PC-9 (cell line): ENCODE measurements at regions of chr21 and their contacts with region 1.

Region 1: DNA sequence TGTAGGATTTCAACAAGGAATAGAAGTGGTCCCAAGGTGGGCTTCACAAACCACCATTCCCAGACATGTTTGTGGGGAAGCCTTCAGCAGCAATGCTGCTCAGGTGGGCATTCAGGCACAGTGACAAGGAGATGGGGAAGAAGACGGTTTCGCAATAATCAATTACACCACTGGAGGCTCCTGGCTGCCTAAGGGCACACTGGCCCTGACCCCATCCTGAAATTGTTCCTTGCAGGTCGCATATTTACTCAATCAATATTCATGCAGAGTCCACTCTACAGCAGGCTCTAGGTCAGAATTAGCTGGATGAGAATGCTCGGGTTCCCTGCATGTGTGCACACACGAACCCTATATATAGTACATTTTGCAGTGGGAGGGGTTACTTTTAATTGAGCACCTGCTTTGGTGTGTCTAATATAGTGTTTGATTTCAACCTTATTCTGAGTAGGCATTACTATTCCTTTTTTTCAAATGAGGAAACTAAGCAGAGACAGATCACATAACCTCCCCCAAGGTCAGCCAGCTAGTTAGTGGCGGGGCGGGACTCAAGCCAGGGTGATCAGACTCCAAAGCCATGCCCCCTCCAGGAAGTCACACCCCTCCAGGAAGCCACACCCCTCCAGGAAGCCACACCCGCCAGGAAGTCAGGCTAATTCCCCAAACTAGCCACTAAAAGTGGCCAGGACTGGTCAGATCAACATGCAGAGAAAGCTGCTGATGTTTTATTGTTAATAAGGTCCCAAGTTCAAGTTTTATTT is 106.5 kb downstream of the HLCS start:
- DNase-seq: peak; percentile 68 to 76
- H3K4me3 ChIP-seq: no peak overlapping the region
- H3K27ac ChIP-seq: peak overlapping the region; percentile 95
- H3K4me1 ChIP-seq: peaks cover 46% of the 10 kb centered on the region
- H3K27me3 ChIP-seq: no peaks in the 10 kb centered on the region
- CTCF ChIP-seq: no peak

Region 2: GRCh38 chr21:36783612-36784383 is 76.1 kb before region 1 on chr21:
- CTCF ChIA-PET with region 1: no interaction called
- POLR2A ChIA-PET with region 1: no interaction called
- intact Hi-C with region 1: loop called (anchors 2 kb)
- DNase-seq: peak; percentile 67 to 92
- H3K4me3 ChIP-seq: 0 out of 2 replicates have a peak overlapping the region, but pooled peaks have one; percentile 24
- H3K27ac ChIP-seq: peak overlapping the region; percentile 62
- H3K4me1 ChIP-seq: peaks cover 31% of the 10 kb centered on the region
- H3K27me3 ChIP-seq: no peaks in the 10 kb centered on the region
- CTCF ChIP-seq: no peak

Region 3: GRCh38 chr21:36881228-36881627 is 21.3 kb after region 1 on chr21:
- CTCF ChIA-PET with region 1: no interaction called
- POLR2A ChIA-PET with region 1: no interaction called
- intact Hi-C with region 1: no loop called
- DNase-seq: no peak
- H3K4me3 ChIP-seq: no peak overlapping the region
- H3K27ac ChIP-seq: no peak overlapping the region
- H3K4me1 ChIP-seq: no peaks in the 10 kb centered on the region
- H3K27me3 ChIP-seq: no peaks in the 10 kb centered on the region
- CTCF ChIP-seq: no peak

Region 4: DNA sequence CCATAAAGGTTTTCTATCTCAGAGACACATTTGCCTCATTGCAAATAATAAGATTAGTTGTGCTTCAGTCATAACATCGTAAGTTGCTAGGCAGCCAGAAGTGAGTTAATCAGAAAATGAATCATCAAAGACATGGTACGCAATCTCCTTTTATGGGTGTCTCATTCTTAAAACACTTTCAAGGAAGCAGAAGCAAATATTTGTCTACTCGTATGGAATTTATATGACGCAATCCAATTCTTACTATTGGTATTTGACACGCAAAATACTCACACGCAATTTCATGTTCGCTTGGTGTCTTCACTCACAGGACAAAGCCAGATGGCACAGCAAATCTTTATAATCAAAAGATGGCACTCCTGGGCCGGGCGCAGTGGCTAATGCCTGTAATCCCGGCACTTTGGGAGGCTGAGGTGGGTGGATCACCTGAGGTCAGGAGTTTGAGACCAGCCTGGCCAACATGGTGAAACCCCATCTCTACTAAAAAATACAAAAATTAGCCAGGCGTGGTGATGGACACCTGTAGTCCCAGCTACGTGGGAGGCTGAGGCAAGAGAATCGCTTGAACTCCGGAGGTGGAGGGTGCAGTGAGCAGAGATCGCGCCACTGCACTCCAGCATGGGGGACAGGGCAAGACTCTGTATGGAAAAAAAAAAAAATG is 50.1 kb after region 1 on chr21:
- CTCF ChIA-PET with region 1: no interaction called
- POLR2A ChIA-PET with region 1: no interaction called
- intact Hi-C with region 1: loop called (anchors 2 kb)
- DNase-seq: peak; percentile 40 to 97
- H3K4me3 ChIP-seq: no peak overlapping the region
- H3K27ac ChIP-seq: peak overlapping the region; percentile 86
- H3K4me1 ChIP-seq: peaks cover 16% of the 10 kb centered on the region
- H3K27me3 ChIP-seq: no peaks in the 10 kb centered on the region
- CTCF ChIP-seq: no peak

Region 5: DNA sequence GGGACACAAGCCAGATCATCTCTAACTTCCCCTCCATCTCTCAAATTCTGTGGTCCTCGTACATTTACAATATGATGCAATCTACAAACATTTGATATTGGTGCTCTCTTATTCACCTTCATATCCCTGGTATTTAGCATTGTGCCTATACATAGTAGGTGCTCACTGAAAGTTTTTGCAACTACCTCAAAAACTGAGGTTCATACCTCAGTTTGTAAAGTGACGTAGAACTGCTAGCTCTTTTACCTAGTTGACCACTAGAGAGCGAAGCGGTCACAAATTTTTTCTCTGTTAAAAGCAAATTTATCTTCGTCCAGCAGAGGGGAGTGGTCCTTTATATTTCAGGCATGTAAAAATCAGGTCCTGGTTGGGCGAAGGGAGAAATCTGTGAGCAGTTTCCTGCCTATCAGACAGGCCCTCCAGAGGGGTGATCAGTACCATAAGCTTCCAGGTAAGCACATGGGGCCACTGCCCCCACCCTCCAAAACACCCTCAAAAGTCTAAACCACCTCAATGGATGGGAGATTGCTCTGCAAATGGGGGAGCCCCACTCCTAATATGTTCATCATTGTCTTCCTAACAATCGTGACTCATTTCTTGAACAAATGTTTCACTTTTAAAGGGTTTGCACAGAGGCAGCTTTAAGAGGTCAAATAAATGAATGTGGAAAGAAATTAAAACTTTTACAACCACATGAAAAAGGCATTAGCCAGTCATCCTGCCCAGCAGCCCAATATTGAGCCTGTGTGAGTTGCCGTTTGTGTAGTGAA is 117.1 kb after region 1 on chr21:
- CTCF ChIA-PET with region 1: no interaction called
- POLR2A ChIA-PET with region 1: no interaction called
- intact Hi-C with region 1: no loop called
- DNase-seq: peak; percentile 27 to 41
- H3K4me3 ChIP-seq: no peak overlapping the region
- H3K27ac ChIP-seq: no peak overlapping the region
- H3K4me1 ChIP-seq: peaks cover 4% of the 10 kb centered on the region; the same call in 1 of the 2 replicates
- H3K27me3 ChIP-seq: no peaks in the 10 kb centered on the region
- CTCF ChIP-seq: peak; percentile 62

Region 6: GRCh38 chr21:37060296-37060695 is 200.4 kb after region 1 on chr21:
- CTCF ChIA-PET with region 1: no interaction called
- POLR2A ChIA-PET with region 1: no interaction called
- intact Hi-C with region 1: no loop called
- DNase-seq: peak; percentile 35 to 84
- H3K4me3 ChIP-seq: no peak overlapping the region
- H3K27ac ChIP-seq: peak overlapping the region; percentile 40
- H3K4me1 ChIP-seq: peaks cover 7% of the 10 kb centered on the region
- H3K27me3 ChIP-seq: no peaks in the 10 kb centered on the region
- CTCF ChIP-seq: no peak